ENCODE measurements at regions of chr2 and their contacts with region 1.

Region 1: DNA sequence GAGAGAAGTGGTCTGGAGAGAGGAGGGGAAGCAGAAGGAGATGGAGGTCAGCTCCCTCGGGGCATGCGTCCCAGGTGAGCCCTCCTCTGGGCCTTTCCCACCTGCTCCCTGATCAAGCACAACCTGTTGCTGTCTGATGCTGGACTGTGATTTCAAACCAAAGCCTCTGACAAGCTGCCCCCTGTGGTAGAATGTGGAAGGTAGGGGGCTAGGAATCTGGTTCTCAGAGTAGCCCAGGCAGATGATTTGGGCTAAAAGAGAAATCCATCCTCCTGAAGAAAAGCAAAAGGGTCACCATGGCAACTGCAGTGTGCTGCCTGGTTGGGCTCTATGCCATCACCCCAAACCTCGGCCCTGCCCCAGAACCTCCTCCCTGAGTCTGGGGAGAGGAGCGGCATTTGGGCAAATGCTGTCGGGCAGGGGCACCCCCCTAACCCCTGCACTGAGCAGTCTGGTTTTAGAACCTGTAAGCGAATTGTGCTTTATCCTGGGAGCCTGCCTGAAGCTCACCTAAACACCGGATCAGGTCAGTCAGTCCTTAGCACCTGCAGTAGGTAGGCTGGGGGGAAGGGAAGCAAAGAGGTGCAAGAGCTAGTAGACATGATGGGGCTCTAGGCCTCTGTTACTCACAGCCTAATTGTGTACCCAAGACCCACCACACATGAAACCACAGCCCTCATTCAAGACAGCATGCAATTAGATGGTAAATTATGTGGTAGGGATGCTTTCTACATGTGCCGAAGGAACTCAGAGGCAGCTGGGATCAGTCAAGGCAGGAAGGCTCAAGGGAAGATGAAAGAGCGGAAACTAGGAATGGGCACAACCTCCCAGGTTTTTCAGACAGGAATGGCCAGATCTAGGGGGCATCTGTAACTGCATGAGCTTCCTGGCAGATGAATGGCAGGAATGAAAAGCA is 83.5 kb downstream of the DNMT3A start:
- DNase-seq: peak; percentile 28
- ATAC-seq: peak; percentile 30
- H3K4me3 Mint-ChIP-seq: no peak overlapping the region
- H3K27ac Mint-ChIP-seq: peak overlapping the region; percentile 92
- H3K4me1 Mint-ChIP-seq: peaks cover 81% of the 10 kb centered on the region
- H3K27me3 Mint-ChIP-seq: no peaks in the 10 kb centered on the region; the same call in 1 of the 2 replicates
- CTCF ChIP-seq: no peak

Region 2: GRCh38 chr2:25270061-25270460 is 11.9 kb after region 1 on chr2:
- CTCF ChIA-PET with region 1: interaction called, 13 read pairs
- POLR2A ChIA-PET with region 1: interaction called, 3 read pairs
- DNase-seq: peak; percentile 50
- ATAC-seq: peak; percentile 89
- H3K4me3 Mint-ChIP-seq: no peak overlapping the region
- H3K27ac Mint-ChIP-seq: peak overlapping the region; percentile 86
- H3K4me1 Mint-ChIP-seq: peaks cover 42% of the 10 kb centered on the region
- H3K27me3 Mint-ChIP-seq: no peaks in the 10 kb centered on the region; the same call in 1 of the 2 replicates
- CTCF ChIP-seq: no peak

Region 3: DNA sequence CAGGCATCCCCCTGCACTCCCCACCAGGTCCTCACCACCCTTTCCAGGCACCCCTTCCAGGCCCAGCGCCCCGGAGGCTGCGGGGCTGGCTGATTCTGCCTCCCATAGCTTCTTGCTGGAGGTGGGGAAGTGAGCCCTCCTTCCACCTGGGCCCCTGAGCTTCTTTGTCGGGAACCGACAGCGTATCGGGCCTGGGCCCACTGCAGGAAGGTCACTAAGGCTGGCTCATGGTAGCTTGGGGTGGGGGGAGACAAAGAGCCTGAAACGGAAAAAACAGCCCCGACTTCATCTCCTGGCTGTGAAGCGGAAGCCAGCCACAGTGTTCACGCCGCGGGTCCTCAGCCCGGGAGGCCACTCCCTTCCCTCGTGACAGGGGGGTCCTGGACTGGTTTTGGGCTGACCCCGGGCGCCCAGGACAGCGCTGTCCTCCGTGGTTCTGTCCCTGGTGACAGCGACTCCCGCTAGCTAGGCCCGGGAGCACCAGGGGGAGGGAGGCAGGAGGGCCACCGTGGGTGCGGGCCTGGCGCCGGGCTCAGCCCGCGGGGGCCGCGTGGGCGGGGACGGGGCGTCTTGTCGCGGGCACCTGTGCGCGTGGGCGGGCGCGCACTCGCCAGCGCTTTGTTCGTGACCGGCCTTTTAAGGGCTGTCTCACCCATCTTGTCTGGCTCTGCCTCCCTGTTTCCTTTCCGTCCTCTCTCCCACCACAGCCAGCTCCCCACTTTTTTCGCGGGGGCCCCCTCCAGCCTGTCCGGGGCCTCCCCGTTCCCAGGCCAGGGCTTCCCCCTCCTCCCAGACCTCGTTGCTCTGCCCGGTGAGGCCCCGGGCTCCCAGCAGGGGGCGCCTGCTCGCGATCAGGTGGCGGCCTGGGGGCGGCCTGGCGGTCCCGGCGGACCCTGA is 18.6 kb after region 1 on chr2:
- CTCF ChIA-PET with region 1: interaction called, 26 read pairs
- POLR2A ChIA-PET with region 1: interaction called, 14 read pairs
- DNase-seq: peak; percentile 81
- ATAC-seq: peak; percentile 47
- H3K4me3 Mint-ChIP-seq: peak overlapping the region; percentile 47
- H3K27ac Mint-ChIP-seq: no peak overlapping the region
- H3K4me1 Mint-ChIP-seq: peaks cover 64% of the 10 kb centered on the region
- H3K27me3 Mint-ChIP-seq: no peaks in the 10 kb centered on the region; the same call in 1 of the 2 replicates
- CTCF ChIP-seq: peak; percentile 73

Region 4: GRCh38 chr2:25294573-25295462 is 36.6 kb after region 1 on chr2:
- CTCF ChIA-PET with region 1: no interaction called
- POLR2A ChIA-PET with region 1: no interaction called
- DNase-seq: no peak
- ATAC-seq: peak; percentile 64
- H3K4me3 Mint-ChIP-seq: no peak overlapping the region
- H3K27ac Mint-ChIP-seq: 0 out of 2 replicates have a peak overlapping the region, but pooled peaks have one; percentile 65
- H3K4me1 Mint-ChIP-seq: peaks cover 26% of the 10 kb centered on the region
- H3K27me3 Mint-ChIP-seq: no peaks in the 10 kb centered on the region
- CTCF ChIP-seq: no peak

Region 5: GRCh38 chr2:25349397-25349796 is 91.2 kb after region 1 on chr2:
- CTCF ChIA-PET with region 1: no interaction called
- POLR2A ChIA-PET with region 1: no interaction called
- DNase-seq: no peak
- ATAC-seq: no peak
- H3K4me3 Mint-ChIP-seq: no peak overlapping the region
- H3K27ac Mint-ChIP-seq: no peak overlapping the region
- H3K4me1 Mint-ChIP-seq: 0 out of 2 replicates have a peak, but pooled peaks cover 2% of the 10 kb centered on the region
- H3K27me3 Mint-ChIP-seq: peaks cover 22% of the 10 kb centered on the region
- CTCF ChIP-seq: no peak

Region 6: DNA sequence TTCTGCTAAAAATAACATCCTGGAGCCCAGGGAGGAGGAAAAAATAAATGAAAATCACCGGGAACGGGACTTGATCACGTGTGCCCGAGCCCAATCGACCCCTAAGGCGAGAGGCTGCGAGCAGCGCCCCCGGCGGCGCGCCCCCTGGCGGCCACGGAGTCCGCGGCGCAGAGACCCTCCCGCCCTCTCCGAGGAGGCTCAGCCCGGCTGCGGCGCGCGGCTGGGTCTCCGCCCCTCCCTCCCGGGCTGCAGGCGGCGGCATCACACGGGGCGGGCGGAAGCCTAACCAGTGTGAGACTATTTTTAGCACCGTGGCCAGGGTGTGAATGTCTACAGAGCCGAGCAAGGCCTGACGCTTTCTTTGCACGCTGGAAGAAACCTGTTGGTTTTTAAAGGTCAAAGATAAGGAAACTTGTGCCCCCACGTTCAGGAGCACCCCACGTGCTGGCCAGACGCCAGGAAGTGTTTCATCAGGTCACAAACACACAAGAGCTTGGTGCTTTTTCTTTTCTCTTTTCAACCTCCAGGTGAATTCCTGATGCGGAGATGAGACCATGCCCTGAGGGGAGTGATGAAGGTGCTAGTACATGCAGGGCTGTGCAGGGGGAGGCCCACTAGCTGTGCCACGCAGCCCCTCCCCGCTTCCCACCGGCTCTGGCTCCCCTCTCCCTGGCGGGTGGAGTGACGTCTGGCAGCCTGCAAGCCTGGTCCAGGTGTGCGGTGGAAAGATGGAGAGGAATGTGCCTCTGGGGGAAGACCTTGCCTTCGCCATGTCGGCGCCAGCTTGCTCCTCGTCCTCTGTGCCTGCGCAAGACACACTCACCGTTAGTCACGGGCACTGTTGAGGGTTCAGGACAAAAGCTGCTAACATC is 118.8 kb after region 1 on chr2:
- CTCF ChIA-PET with region 1: no interaction called
- POLR2A ChIA-PET with region 1: no interaction called
- DNase-seq: peak; percentile 92
- ATAC-seq: peak; percentile 95
- H3K4me3 Mint-ChIP-seq: peak overlapping the region; percentile 52
- H3K27ac Mint-ChIP-seq: peak overlapping the region; percentile 48; the same call in 1 of the 2 replicates
- H3K4me1 Mint-ChIP-seq: peaks cover 16% of the 10 kb centered on the region
- H3K27me3 Mint-ChIP-seq: peaks cover 26% of the 10 kb centered on the region
- CTCF ChIP-seq: peak; percentile 91